Activated CD8-positive, alpha-beta memory T cell treated with anti-CD3 and anti-CD28 coated beads, Interleukin-2, amount 10 ng/mL, durations not matched to agents 7 days and 5 days (primary cell): ENCODE measurements at regions of chr7 and their contacts with region 1.

Region 1: GRCh38 chr7:99997545-99998137 is 17.8 kb upstream of the ZKSCAN1 start:
- DNase-seq: peak; percentile 90
- ATAC-seq: peak; percentile 95
- H3K4me3 Mint-ChIP-seq: peak overlapping the region; percentile 65
- H3K27ac Mint-ChIP-seq: peak overlapping the region; percentile 87
- H3K4me1 Mint-ChIP-seq: peaks cover 20% of the 10 kb centered on the region
- H3K27me3 Mint-ChIP-seq: peaks cover 5% of the 10 kb centered on the region

Region 2: DNA sequence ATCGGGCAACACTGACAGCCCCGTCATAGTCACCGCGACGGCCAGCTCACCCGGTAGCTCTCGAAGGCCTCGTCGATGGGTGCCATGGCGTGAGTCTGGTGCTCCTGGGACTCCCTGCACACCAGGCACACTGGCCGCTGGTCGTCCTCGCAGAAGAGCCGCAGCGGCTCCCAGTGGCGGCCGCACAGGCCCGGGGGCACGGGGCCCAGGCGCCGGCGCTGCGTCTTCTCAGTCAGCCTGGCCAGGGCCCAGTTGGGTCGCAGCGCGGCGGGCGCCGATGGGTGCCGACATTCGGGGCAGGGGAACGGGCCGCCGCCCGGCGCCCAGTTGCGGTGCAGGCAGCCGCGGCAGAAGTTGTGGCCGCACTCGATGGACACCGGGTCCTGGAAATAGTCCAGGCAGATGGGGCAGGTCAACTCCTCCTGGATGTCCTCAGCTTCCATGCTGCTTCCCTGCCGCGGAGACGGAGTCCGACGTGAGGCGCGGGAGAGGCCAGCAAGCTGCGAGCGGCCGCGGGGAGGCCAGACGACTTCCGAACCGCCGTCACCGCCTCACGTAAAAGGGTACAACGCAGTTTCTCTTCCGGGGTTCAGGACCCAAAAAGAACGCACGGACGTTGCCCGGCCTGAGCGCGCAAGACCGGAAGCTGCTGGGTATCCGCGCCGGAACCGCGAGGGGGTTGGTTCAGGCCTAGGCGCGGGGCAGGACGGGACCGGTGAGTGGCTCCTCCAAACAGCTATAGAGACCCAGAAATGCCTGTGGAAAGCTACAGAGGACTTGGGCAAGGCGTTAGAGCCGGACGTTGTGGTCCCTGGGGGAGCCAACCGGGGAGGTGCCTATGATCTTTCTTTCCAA is 78.5 kb before region 1 on chr7 and contains the start of gene TRIM4:
- CTCF ChIA-PET with region 1: interaction called, 156 read pairs
- DNase-seq: peak; percentile 96
- ATAC-seq: peak; percentile 99
- H3K4me3 Mint-ChIP-seq: peak within 1 kb of the TSS; percentile 94
- H3K27ac Mint-ChIP-seq: peak within 1 kb of the TSS; percentile 97
- H3K4me1 Mint-ChIP-seq: peaks cover 49% of the 10 kb centered on the region
- H3K27me3 Mint-ChIP-seq: no peaks in the 10 kb centered on the region
- total RNA-seq, gene TRIM4: 26.4 to 26.7 TPM

Region 3: DNA sequence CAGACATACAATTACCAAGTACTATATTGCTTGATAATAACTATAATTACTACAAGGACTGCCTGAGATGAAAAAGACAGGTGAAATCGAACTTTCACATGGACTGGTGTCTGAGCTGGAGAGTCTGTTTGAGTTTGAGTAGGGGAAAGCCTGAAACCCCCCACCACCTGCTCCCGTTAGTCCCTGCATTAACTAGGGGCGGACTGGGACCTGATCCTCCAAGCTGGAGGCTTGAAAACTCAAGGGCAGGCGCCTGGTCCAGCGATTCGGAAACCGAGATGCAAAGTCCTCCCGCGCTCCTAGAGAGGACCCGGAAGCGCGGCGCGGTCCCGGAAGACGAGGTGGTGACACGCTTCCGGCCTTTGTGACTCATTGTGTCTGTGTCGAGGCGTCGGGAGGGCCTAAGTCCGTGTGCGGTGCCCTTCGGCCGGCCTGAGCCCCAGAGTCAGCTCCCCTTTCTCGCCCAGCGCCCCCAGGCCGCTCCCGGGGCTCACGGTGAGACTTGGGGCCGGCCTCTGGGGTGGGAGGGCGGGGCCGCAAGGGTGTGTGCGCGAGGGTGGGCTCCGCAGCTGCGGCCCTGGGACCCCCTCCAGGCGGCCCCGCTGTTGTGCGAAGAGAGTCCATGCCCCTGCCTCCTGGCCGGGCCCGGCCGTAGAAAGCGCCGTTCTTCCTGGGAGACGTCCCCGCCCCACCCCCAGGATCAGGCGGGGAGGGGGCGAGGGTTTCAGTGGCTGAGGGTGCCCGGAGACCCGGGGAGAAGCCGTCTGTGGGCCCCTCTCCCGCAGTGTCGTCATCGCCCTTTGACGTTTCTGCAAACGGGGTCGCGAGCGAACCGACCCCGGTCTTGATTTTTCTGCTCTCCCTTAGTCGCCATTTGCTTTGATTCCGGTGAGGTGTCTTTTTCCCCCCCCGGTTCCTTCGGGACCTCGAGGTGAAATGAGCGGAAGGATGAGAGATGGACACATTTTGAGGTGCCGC is 17.9 kb after region 1 on chr7 and contains the start of gene ZKSCAN1:
- CTCF ChIA-PET with region 1: interaction called, 35 read pairs
- DNase-seq: peak; percentile 91
- ATAC-seq: peak; percentile 98
- H3K4me3 Mint-ChIP-seq: peak within 1 kb of the TSS; percentile 92
- H3K27ac Mint-ChIP-seq: peak within 1 kb of the TSS; percentile 96
- H3K4me1 Mint-ChIP-seq: peaks cover 44% of the 10 kb centered on the region
- H3K27me3 Mint-ChIP-seq: no peaks in the 10 kb centered on the region
- total RNA-seq, gene ZKSCAN1: 55.5 to 58.6 TPM

Region 4: GRCh38 chr7:100049441-100050311 is 52.0 kb after region 1 on chr7 and contains the start of gene ZSCAN21:
- CTCF ChIA-PET with region 1: interaction called, 82 read pairs
- DNase-seq: peak; percentile 82
- ATAC-seq: peak; percentile 91
- H3K4me3 Mint-ChIP-seq: peak within 1 kb of the TSS; percentile 92
- H3K27ac Mint-ChIP-seq: peak within 1 kb of the TSS; percentile 93
- H3K4me1 Mint-ChIP-seq: peaks cover 20% of the 10 kb centered on the region
- H3K27me3 Mint-ChIP-seq: no peaks in the 10 kb centered on the region
- total RNA-seq, gene ZSCAN21: 5.6 to 7.9 TPM

Region 5: DNA sequence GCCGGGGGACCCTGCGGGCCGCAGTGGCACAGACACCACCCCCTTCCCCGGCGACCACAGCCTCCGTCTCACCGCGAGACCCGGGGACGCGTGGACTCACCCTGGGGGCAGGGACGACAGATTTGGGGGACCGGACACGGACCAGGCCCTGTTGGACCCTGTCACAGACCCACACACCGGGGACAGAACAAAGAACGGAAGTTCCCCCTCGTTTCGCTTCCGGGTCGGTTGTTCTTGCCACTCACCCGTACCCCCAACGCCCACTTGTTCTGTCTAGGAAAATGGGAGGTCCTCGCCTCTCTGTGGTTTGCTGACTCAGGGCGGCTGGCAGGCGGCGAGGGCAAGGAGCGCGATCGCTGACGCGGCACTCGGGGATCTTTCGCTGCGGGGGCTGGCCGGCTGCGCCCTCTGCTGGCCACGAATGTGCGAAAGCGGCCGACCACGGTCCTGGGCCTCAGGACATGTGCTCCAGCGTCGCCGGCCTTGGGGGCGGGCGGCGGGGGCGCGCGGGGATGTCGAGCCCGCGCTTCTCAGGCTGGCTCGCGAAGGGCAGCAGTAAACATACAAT is 84.0 kb after region 1 on chr7 and contains the start of gene ZNF3:
- CTCF ChIA-PET with region 1: interaction called, 11 read pairs
- DNase-seq: peak; percentile 99
- ATAC-seq: peak; percentile 91
- H3K4me3 Mint-ChIP-seq: peak within 1 kb of the TSS; percentile 88
- H3K27ac Mint-ChIP-seq: peak within 1 kb of the TSS; percentile 87
- H3K4me1 Mint-ChIP-seq: peaks cover 32% of the 10 kb centered on the region
- H3K27me3 Mint-ChIP-seq: no peaks in the 10 kb centered on the region
- total RNA-seq, gene ZNF3: 21.2 to 24.1 TPM